Dendritic cell treated with granulocyte-macrophage colony-stimulating factor and Interleukin-4, amounts not matched to agents 40 ng/mL and 50 ng/mL, for 4 days (primary cell): ENCODE measurements at regions of chr20 and their contacts with region 1.

Region 1: GRCh38 chr20:49091762-49092161 is 45.6 kb downstream of the CSE1L start:
- H3K4me3 Mint-ChIP-seq: no peak overlapping the region
- H3K27ac Mint-ChIP-seq: no peak overlapping the region
- H3K4me1 Mint-ChIP-seq: no peaks in the 10 kb centered on the region
- H3K27me3 Mint-ChIP-seq: no peaks in the 10 kb centered on the region

Region 2: DNA sequence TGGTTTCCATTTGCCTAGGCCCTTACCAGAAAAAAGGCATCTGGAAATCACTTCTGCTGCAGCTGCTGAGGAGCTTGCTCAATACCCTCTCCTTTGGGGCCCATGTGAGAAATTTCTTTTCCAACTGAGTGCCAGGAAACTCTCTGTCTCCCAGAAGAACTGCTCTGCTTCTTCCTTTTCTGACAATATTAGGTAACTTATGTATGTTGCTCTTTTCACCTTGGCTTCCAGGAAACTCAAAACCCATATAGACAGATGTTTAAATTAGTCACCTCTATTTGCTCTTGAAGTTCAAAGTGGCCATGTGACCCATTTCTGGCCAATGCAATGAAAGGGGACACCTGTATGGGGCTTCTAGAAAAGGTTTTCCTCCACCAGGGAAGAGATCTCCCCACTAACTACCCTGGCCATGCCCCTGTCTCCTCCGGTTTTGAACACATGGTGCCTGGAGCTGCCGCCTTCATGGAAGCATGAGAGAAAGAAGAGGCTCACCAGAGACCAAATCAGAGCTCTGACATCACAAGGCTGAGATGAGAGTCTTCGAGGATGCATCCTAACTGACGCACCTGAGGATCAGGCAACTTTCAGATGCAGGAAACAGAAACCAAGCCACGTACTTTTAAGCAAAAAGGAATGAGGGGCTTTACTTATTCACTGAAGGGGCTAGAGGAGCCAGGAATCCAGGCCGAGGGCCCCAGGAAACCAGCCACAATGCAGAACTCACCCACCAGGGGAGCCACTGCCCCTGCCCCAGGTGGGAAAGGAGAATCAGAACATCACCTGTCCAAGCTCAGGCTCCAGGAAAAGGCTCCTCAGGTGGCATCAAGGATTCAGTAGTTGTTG is 385.4 kb before region 1 on chr20:
- intact Hi-C with region 1: no loop called
- H3K4me3 Mint-ChIP-seq: no peak overlapping the region
- H3K27ac Mint-ChIP-seq: no peak overlapping the region
- H3K4me1 Mint-ChIP-seq: peaks cover 76% of the 10 kb centered on the region
- H3K27me3 Mint-ChIP-seq: no peaks in the 10 kb centered on the region

Region 3: DNA sequence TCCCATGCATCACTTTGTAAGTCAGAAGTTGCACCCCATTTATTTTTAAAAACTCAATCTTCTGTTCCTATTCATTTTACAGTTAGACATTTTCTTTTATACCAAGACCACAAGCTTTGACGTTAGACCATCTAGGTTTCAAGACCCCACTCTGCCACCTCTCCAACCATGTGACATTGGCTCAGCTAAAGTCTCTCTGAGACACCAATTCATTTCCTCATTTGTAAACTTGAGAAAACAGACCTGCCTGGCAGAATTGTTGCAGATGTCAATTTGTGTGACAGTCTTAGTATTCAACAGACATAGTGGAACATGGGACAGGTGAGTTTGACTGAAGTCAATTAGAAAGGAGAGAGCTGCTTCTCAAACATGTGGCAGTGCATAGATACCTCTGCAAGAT is 101.3 kb before region 1 on chr20:
- intact Hi-C with region 1: loop called (anchors 5 kb)
- H3K4me3 Mint-ChIP-seq: no peak overlapping the region
- H3K27ac Mint-ChIP-seq: no peak overlapping the region
- H3K4me1 Mint-ChIP-seq: no peaks in the 10 kb centered on the region
- H3K27me3 Mint-ChIP-seq: no peaks in the 10 kb centered on the region

Region 4: GRCh38 chr20:49297605-49298530 is 206.1 kb after region 1 on chr20:
- intact Hi-C with region 1: no loop called
- H3K4me3 Mint-ChIP-seq: no peak overlapping the region
- H3K27ac Mint-ChIP-seq: peak overlapping the region; percentile 77
- H3K4me1 Mint-ChIP-seq: peaks cover 9% of the 10 kb centered on the region
- H3K27me3 Mint-ChIP-seq: no peaks in the 10 kb centered on the region